ENCODE measurements at regions of chr9 and their contacts with region 1.

Region 1: GRCh38 chr9:90698871-90699430 is 56.3 kb upstream of the DIRAS2 start:
- DNase-seq: no peak
- H3K4me3 ChIP-seq: no peak overlapping the region
- H3K27ac ChIP-seq: no peak overlapping the region
- H3K4me1 ChIP-seq: no peaks in the 10 kb centered on the region
- CTCF ChIP-seq: no peak

Region 2: DNA sequence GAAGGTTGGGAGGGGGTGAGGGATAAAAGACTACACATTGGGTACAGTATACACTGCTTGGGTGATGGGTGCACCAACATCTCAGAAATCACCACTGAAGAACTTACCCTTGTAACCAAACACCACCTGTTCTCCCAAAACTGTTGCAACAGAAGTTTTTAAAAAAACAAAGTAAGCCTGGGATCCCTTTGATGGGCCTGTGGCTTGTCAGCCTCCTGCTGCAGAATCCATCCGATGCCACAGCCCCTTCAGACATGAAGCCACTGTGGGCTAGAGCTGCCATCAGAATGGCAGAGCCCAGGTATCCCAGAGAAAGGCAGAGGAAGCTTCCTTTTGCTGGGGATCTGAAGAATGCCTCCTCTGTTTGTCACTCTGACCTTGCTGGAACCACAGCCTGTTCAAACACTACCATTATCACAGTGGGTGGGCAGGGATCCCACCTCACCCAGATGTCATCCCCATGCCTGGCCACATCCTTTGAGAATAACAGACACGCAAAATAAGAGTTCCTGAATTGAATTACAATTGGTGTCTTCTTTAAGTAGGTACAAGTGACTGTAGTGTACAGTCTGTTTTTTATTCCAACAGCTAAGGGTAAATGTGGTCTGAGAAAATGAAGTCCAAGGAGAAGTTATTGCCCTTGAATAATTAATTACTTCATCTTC is 21.8 kb after region 1 on chr9:
- CTCF ChIA-PET with region 1: no interaction called
- POLR2A ChIA-PET with region 1: interaction called, 12 read pairs
- intact Hi-C with region 1: no loop called
- DNase-seq: no peak
- H3K4me3 ChIP-seq: no peak overlapping the region
- H3K27ac ChIP-seq: no peak overlapping the region
- H3K4me1 ChIP-seq: no peaks in the 10 kb centered on the region
- CTCF ChIP-seq: no peak

Region 3: GRCh38 chr9:90881648-90882047 is 182.7 kb after region 1 on chr9:
- CTCF ChIA-PET with region 1: no interaction called
- POLR2A ChIA-PET with region 1: no interaction called
- intact Hi-C with region 1: no loop called
- DNase-seq: peak; percentile 98
- H3K4me3 ChIP-seq: peak overlapping the region; percentile 40
- H3K27ac ChIP-seq: peak overlapping the region; percentile 92
- H3K4me1 ChIP-seq: peaks cover 48% of the 10 kb centered on the region
- CTCF ChIP-seq: no peak

Measured in OCI-LY7 (cell line).